ENCODE measurements at regions of chr1 and their contacts with region 1.

Region 1: DNA sequence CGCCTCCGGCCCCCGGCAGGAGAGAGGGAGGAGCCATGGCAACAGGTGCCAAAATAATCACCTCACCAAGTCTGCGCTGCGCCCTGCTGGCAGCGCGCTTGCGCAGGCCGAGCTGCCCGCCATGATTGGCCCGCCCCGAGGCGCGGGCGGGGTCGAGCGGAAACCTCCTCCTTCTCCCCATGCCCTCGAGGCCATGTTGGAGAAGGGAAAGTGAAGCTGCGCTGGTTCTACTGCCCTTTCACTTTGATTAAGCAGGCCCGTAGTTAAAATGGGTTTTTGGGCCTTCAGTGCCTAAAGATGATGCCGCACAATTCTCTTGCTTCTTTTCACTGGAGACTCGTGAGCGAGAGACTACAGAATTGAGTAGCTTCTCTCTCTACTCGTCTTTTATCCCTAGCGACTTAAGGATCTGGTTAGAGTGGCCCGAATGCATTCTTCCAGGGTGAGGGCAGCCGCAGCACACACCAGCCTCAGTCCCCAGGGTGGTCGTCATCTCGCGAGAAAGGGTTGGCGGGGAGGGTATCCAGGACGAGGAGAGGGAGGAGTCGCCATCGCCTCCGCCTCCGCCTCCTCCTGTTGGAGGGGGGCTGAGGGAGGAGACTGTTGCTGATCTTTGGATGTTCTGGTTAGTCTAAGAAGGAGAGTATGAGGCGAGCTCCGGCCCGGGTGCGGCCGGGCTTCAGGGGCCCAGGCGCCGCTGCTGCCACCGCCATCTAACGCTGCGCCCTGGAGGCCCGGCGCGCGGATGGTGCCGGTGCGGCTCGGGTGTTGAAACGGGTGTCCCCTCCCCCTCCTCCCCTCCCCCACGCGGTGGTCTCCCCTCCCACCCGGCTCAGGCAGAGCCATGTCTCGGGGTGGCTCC is at the start of gene DCAF6:
- DNase-seq: peak; percentile 97
- ATAC-seq: peak; percentile 94
- total RNA-seq, gene DCAF6: 231 TPM

Region 2: GRCh38 chr1:167715157-167715999 is 220.9 kb before region 1 on chr1:
- intact Hi-C with region 1: loop called (anchors 2 kb)
- DNase-seq: peak; percentile 85
- ATAC-seq: peak; percentile 63

Region 3: DNA sequence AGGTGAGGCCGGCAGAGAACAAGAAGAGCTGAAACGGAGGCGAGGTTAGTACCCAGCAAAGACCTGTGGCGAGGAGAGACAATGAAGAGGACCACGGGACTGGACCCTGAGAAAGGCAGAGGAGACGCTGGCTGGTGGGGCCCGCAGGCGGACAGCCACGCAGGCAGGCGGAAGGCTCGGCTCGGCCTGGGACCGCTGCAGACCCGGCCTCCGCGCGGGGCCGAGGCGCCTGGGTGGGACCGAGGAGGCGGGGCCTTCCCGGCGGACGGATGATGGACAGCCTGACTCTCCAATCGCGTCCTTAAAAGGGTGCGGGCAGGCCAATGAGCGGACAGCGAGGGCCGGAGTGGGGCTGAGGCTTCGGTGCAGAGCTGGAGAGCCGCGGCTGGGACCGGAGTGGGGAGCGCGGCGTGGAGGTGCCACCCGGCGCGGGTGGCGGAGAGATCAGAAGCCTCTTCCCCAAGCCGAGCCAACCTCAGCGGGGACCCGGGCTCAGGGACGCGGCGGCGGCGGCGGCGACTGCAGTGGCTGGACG is 214.6 kb before region 1 on chr1 and contains the start of gene MPZL1:
- intact Hi-C with region 1: loop called (anchors 1 kb)
- DNase-seq: peak; percentile 97
- ATAC-seq: peak; percentile 99
- total RNA-seq, gene MPZL1: 47.9 TPM

Region 4: GRCh38 chr1:167803358-167804207 is 132.7 kb before region 1 on chr1:
- intact Hi-C with region 1: loop called (anchors 5 kb)
- DNase-seq: peak; percentile 94
- ATAC-seq: peak; percentile 96

Region 5: DNA sequence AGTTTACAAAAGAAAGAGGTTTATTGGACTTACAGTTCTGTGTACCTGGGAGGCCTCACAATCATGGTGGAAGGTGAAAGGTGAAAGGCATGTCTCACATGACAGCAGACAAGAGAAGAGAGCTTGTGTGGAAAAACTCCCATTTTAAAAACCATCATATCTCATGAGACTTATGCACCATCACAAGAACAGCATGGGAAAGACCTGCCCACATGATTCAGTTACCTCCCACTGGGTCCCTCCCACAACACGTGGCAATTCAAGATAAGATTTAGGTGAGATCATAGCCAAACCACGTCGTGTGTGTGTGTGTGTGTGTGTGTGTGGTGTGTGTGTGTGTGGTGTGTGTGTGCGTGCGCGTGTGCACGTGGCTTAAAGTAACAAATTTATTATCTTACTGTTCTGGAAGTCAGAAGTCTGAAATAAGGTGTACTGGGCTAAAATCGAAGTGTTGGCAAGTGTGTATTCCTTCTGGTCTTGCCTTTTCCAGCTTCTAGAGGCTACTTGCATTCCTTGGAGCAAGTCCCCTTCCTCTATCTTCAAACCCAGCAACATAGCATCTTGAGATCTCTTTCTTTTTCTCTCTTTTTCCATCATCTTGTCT is 48.7 kb after region 1 on chr1:
- intact Hi-C with region 1: no loop called
- DNase-seq: no peak
- ATAC-seq: no peak

Region 6: DNA sequence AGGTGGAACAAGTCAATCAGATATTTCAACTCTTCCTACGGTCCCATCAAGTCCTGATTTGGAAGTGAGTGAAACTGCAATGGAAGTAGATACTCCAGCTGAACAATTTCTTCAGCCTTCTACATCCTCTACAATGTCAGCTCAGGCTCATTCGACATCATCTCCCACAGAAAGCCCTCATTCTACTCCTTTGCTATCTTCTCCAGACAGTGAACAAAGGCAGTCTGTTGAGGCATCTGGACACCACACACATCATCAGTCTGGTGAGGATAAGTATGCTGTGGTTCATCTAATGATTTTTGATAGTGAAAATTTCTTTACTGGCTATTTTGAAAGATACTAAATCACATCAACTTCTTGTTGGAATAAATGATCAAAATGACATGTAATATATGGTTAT is 68.2 kb after region 1 on chr1:
- intact Hi-C with region 1: loop called (anchors 5 kb)
- DNase-seq: no peak
- ATAC-seq: no peak

Region 7: GRCh38 chr1:168082008-168082876 is 145.9 kb after region 1 on chr1:
- intact Hi-C with region 1: loop called (anchors 10 kb)
- DNase-seq: peak; percentile 76
- ATAC-seq: peak; percentile 52